Aorta (tissue), 5 donors: ENCODE measurements at regions of chr11 and their contacts with region 1.

Region 1: DNA sequence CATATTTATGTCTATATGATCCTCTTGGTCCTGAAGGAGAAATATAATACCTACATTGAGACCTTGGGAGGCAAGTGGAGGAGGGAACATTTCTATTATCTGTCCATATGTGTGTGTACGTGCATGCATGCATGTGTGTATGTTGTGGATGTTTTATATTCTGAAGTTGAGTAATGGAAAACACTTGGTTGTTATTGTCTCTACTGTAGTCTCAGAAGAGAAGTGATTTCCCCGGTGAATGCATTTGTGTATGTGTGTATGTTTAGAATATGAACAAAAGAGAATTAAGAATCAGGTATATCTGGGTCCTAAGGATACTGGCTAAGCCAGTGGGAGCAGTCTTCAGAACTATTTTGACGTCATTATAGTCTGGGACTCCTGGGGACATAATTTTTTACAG is at the start of gene OR52N1:
- DNase-seq: no peak
- ATAC-seq: no peak
- H3K4me3 ChIP-seq: no peak within 1 kb of the TSS
- H3K27ac ChIP-seq: no peak within 1 kb of the TSS
- H3K4me1 ChIP-seq: no peaks in the 10 kb centered on the region
- H3K27me3 ChIP-seq: no peaks in the 10 kb centered on the region
- total RNA-seq, gene OR52N1: not detected

Region 2: GRCh38 chr11:5767056-5767455 is 24.1 kb before region 1 on chr11:
- intact Hi-C with region 1: loop called in 1 of 2 experiments (anchors 2 kb)
- DNase-seq: no peak
- ATAC-seq: no peak
- H3K4me3 ChIP-seq: no peak overlapping the region
- H3K27ac ChIP-seq: no peak overlapping the region
- H3K4me1 ChIP-seq: no peaks in the 10 kb centered on the region
- H3K27me3 ChIP-seq: no peaks in the 10 kb centered on the region